ENCODE measurements at regions of chr12 and their contacts with region 1.

Region 1: DNA sequence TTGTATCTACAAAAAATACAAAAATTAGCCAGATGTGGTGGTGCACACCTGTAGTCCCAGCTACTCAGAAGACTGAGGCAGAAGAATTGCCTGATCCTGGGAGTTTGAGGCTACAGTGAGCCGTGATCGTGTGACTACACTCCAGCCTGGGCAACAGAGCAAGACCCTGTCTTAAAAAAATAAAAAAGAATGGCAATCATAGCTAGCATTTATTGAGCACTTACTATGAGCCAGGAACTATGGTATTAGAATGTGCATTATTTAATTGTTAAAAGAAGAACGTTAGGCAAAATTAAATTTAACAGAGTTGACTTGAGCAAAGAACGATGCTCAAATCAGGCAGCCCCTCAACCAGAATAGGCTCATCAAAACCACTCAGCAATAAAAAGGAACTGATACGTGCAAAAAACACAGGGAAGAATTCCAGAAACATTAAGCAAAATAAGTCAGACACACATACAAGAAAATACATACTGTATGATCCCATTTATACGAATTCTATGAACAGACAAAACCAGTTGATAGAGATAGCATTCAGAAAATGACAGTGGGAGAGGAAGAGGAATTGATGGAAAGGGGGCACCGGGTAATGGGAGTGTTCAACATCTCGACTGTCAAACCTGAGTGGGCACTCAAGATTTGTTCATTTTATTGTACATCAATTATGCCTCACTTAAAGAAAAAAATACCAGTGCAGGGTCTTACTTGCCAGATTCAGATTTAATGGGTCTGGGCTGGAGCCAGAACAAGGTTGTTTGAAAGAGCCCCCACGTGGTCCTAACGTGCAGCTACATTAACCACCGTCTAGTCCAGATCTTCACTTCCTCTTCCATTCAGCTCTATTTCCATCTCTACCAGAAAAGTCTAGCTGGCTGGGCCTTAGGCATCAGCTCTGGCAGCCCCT is 8.0 kb downstream of the SCNN1A start:
- DNase-seq: peak in 1 of 2 donors; percentile 78
- ATAC-seq: peak; percentile 60 to 76 (median 68)
- H3K4me3 ChIP-seq: no peak overlapping the region
- H3K4me3 Mint-ChIP-seq: peak overlapping the region; percentile 70
- H3K27ac ChIP-seq: peak overlapping the region; percentile 60
- H3K27ac Mint-ChIP-seq: peak overlapping the region; percentile 81 to 84
- H3K4me1 ChIP-seq: peaks cover 41% of the 10 kb centered on the region
- H3K4me1 Mint-ChIP-seq: peaks cover 27 to 40% of the 10 kb centered on the region in 2 donors
- H3K27me3 ChIP-seq: no peaks in the 10 kb centered on the region
- H3K27me3 Mint-ChIP-seq: no peaks in the 10 kb centered on the region
- CTCF ChIP-seq: peak; percentile 41

Region 2: GRCh38 chr12:6323340-6323994 is 43.9 kb before region 1 on chr12:
- intact Hi-C with region 1: loop called (anchors 1 kb)
- DNase-seq: peak in 1 of 2 donors; percentile 78
- ATAC-seq: peak; percentile 87 to 91 (median 87)
- H3K4me3 ChIP-seq: no peak overlapping the region
- H3K4me3 Mint-ChIP-seq: peak overlapping the region; percentile 91
- H3K27ac ChIP-seq: peak overlapping the region; percentile 11
- H3K27ac Mint-ChIP-seq: peak overlapping the region; percentile 87 to 90
- H3K4me1 ChIP-seq: peaks cover 53% of the 10 kb centered on the region
- H3K4me1 Mint-ChIP-seq: peaks cover 55 to 69% of the 10 kb centered on the region in 2 donors
- H3K27me3 ChIP-seq: no peaks in the 10 kb centered on the region
- H3K27me3 Mint-ChIP-seq: no peaks in the 10 kb centered on the region
- CTCF ChIP-seq: peak; percentile 74